ENCODE measurements at regions of chr20 and their contacts with region 1.

Region 1: DNA sequence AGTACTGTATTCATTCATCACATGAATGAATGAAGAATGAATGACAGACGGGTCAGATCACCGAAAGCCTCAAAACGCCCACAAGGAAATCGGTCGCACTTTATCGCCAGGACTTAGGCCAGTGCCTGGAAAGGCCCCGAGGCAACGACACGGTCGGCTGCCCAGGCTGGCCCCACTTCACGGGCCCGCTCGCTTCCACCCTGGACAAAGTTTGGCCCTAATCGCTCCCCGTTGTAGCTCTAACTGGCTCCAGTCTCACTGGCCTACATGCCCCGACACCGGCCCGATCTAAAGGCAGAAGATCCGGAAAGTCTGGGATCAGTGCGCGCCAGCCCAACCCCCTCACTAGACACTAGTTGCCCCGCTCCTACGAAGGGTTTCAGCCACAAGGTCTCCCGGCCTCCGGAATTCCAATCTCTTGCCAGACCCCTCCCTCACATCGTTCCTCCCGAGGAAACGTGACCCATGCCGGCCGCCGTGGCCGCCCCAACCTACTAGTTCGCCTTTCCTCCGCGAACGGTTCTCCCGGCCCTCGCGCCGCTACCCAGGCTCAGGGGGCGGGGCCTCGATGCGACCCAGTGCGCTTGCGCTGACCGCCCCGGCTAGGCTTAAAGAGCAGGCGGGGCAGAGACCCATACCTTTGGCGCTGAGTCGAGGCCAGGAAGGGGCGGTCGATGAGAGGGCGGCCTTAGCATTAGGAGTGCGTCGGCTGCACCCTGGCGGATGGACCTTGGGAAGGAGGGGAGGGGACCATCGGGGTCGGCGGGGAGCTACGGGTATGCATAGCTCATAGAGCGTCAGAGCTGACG is at the starts of genes GSS and MYH7B:
- DNase-seq: peak; percentile 100
- H3K4me3 Mint-ChIP-seq: peak within 1 kb of the TSS; percentile 95
- H3K27ac Mint-ChIP-seq: peak within 1 kb of the TSS; percentile 95
- H3K4me1 Mint-ChIP-seq: peaks cover 25% of the 10 kb centered on the region
- H3K27me3 Mint-ChIP-seq: no peaks in the 10 kb centered on the region
- total RNA-seq, gene GSS: 71.0 and 71.3 TPM in 2 replicates
- total RNA-seq, gene MYH7B: 0.19 and 0.52 TPM in 2 replicates

Region 2: DNA sequence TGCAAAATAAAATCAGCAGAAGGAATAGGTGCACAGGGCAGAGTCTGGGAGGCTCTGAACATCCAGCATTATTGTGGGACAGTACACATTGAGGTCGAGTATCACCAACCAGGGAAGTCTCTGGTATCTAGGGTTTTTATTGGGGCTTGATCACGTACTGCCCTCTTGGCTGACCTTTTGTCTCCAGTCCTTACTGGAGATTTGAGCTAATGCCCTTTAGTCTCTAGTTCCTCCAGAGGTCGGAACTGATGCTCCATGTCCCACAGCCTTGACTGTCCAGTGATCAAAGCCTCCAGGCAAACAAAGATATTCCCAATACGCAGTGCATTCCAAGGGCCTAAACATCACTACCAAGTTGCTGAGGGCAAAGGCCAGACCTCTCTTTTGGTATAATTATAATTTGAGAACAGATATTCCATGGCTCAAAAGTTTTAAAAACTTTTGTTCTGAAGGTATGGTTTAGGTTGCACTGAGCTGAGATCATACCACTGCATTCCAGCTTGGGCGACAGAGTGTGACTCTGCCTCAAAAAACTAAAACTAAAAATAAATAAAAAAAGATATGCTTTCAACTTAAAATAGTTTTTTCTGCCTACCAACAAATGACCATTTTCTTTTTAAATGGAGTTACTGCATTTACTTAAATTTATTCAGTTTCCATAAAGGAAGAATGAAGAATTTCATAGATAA is 496.1 kb before region 1 on chr20:
- intact Hi-C with region 1: no loop called
- DNase-seq: no peak
- H3K4me3 Mint-ChIP-seq: no peak overlapping the region
- H3K27ac Mint-ChIP-seq: no peak overlapping the region
- H3K4me1 Mint-ChIP-seq: peaks cover 2% of the 10 kb centered on the region
- H3K27me3 Mint-ChIP-seq: no peaks in the 10 kb centered on the region

Region 3: DNA sequence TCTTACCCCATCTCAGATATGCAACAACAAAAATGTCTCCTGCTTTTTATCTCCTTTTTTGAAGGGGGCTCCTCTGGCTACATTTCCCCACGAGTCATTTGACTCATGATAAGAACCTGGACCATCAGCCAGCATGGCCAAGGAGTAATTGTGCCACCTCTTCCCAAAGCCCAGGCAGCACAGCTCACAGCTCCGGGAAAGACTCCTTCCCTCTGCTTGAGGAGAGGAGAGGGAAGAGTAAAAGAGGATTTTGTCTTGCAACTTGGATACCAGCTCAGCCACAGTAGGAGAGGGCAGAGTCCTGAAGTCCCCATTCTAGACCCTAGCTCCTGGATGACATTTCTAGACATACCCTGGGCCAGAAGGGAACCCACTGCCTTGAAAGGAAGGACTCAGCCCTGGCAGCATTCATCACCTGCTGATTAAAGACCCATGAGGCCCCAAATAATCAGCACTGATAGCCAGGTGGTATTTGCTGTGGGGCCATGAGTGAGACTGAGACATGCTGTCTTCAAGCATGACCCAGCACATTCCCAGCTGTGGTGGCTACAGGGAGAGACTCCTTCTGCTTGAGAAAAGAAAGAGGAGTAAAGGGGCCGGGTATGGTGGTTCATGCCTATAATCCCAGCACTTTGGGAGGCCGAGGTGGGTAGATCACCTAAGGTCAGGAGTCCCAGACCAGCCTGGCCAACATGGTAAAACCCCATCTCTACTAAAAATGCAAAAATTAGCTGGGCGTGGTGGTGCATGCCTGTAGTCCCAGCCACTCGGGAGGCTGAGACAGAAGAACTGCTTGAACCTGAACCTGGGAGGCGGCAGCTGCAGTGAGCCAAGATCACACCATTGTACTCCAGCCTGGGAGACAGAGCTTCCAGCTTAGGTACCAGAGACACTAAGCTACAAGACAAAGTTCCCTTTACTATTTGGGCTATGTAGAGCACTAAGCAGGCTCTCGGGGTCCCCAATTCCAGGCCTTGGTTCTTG is 158.1 kb before region 1 on chr20:
- intact Hi-C with region 1: no loop called
- DNase-seq: no peak
- H3K4me3 Mint-ChIP-seq: no peak overlapping the region
- H3K27ac Mint-ChIP-seq: no peak overlapping the region
- H3K4me1 Mint-ChIP-seq: peaks cover 9% of the 10 kb centered on the region
- H3K27me3 Mint-ChIP-seq: no peaks in the 10 kb centered on the region

Region 4: DNA sequence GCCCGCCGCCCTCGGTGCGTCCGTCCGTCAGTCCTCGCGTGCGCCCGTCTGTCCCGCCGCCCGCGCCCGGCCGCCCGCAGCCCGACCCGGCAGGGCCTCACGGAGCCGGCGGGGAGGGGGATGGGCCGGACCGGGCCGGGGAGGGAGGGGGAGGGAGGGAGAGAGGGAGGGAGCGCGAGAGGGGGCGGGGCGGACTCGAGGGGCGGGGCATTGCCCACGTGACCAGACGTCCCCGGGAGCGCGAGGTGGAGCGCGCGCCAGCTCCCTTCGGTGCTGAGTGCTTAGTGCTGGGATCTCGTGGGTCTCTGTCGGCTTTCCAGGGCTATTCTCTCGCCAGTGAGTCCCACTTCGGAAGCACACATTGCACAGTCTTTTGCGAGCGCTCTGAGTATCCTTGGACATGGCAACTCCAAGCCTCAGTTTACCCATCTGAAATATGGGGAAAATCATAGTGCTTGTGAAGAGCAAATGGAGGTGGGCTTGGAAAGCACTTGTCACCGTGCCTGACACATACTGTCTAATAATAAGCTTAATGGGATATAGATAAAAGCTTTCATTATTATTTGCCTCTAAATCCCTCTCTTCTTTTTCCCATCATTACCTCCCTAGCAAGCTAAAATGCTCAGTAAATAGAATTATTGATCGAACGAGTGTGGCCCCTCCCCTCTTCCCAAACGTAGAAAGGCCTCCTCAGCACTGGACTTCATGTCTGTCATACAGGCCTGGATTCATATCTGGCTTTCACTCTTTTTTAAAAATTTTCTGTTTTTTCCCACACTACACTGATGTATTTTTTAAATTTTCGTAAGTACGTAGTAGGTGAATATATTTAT is 129.7 kb before region 1 on chr20 and contains the start of gene NCOA6:
- intact Hi-C with region 1: loop called (anchors 2 kb)
- DNase-seq: peak; percentile 92
- H3K4me3 Mint-ChIP-seq: peak within 1 kb of the TSS; percentile 95
- H3K27ac Mint-ChIP-seq: peak within 1 kb of the TSS; percentile 93
- H3K4me1 Mint-ChIP-seq: peaks cover 28% of the 10 kb centered on the region
- H3K27me3 Mint-ChIP-seq: peaks cover 11% of the 10 kb centered on the region
- total RNA-seq, gene NCOA6: 25.1 and 26.8 TPM in 2 replicates

Region 5: DNA sequence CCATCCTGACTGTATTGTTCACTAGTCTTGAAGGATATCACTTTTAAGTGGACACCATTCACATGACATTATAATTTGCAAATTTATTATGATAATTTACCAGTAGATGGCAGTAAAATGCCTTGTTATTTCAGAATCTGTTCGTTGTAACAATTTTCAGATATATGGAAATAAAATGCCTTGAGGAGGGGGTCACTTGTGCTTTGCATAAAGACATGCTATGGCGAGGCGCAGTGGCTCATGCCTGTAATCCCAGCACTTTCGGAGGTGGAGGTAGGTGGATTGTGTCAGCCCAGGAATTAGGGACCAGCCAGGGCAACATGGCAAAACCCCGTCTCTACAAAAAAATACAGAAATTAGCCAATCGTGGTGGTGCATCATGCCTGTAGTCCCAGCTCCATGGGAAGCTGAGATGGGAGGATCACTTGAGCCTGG is 121.0 kb before region 1 on chr20:
- intact Hi-C with region 1: loop called (anchors 2 kb)
- DNase-seq: no peak
- H3K4me3 Mint-ChIP-seq: no peak overlapping the region
- H3K27ac Mint-ChIP-seq: no peak overlapping the region
- H3K4me1 Mint-ChIP-seq: peaks cover 2% of the 10 kb centered on the region
- H3K27me3 Mint-ChIP-seq: peaks cover 35% of the 10 kb centered on the region

Region 6: GRCh38 chr20:34891166-34892062 is 64.0 kb before region 1 on chr20:
- intact Hi-C with region 1: loop called (anchors 1 kb)
- DNase-seq: peak; percentile 75
- H3K4me3 Mint-ChIP-seq: peak overlapping the region; percentile 46
- H3K27ac Mint-ChIP-seq: peak overlapping the region; percentile 90
- H3K4me1 Mint-ChIP-seq: peaks cover 49% of the 10 kb centered on the region
- H3K27me3 Mint-ChIP-seq: no peaks in the 10 kb centered on the region

Region 7: GRCh38 chr20:34922654-34923424 is 32.6 kb before region 1 on chr20:
- intact Hi-C with region 1: loop called (anchors 2 kb)
- DNase-seq: no peak
- H3K4me3 Mint-ChIP-seq: no peak overlapping the region
- H3K27ac Mint-ChIP-seq: no peak overlapping the region
- H3K4me1 Mint-ChIP-seq: peaks cover 38% of the 10 kb centered on the region
- H3K27me3 Mint-ChIP-seq: no peaks in the 10 kb centered on the region